ENCODE measurements at regions of chr5 and their contacts with region 1.

Region 1: GRCh38 chr5:76175051-76175666 is 92.0 kb downstream of the SV2C start:
- DNase-seq: peak; percentile 47 to 56
- H3K4me3 ChIP-seq: no peak overlapping the region
- H3K4me3 Mint-ChIP-seq: no peak overlapping the region
- H3K27ac Mint-ChIP-seq: no peak overlapping the region
- H3K4me1 ChIP-seq: no peaks in the 10 kb centered on the region
- H3K4me1 Mint-ChIP-seq: no peaks in the 10 kb centered on the region
- H3K27me3 ChIP-seq: no peaks in the 10 kb centered on the region
- H3K27me3 Mint-ChIP-seq: no peaks in the 10 kb centered on the region
- CTCF ChIP-seq: peak; percentile 77 to 84

Region 2: DNA sequence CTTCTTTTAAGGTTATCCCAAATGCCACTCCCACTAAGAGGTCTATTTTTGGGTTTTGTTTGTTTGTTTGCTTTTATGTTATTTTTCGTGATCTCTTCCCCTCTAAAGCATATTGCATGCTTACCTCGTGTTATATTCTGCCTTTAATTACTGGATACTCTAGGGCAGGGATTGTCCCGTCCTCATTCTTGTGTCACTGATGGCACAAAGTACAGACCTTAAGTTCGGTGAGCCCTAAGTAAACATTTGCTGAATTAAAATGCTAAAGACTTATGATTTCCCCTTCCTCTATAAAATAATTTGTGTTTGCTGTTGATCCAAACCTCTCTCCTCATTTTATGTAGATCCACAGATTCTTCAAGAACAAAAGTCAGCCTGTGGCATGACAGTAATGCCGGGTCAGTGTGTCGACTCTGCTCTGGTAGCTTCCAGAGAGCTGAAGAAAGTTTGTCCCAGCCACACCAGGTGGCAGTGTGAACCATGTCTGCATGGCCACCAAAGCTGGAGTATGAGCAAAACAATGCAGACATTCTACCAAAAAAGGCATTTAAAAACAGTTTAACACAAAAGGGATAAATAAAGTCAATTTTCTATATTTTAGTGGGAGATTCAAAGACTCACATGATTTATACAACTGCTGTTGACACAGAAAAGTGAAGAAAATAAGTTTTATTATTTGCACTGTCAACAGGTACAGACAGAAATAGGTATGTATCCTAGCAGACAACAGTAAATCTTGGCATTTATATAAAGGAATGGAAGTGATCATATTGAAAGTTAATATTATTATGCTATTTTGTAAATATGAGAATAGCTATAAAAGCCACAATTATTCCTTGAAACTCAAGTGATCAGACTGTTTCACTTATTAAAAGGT is 440.0 kb before region 1 on chr5:
- CTCF ChIA-PET with region 1: interaction called, 23 read pairs
- POLR2A ChIA-PET with region 1: no interaction called
- intact Hi-C with region 1: loop called (anchors 2 kb)
- DNase-seq: peak; percentile 61 to 62
- H3K4me3 ChIP-seq: no peak overlapping the region
- H3K4me3 Mint-ChIP-seq: no peak overlapping the region
- H3K27ac Mint-ChIP-seq: no peak overlapping the region
- H3K4me1 ChIP-seq: no peaks in the 10 kb centered on the region
- H3K4me1 Mint-ChIP-seq: no peaks in the 10 kb centered on the region
- H3K27me3 ChIP-seq: no peaks in the 10 kb centered on the region; the same call in 1 of the 2 replicates
- H3K27me3 Mint-ChIP-seq: peaks cover 7% of the 10 kb centered on the region
- CTCF ChIP-seq: peak; percentile 59 to 80

Region 3: DNA sequence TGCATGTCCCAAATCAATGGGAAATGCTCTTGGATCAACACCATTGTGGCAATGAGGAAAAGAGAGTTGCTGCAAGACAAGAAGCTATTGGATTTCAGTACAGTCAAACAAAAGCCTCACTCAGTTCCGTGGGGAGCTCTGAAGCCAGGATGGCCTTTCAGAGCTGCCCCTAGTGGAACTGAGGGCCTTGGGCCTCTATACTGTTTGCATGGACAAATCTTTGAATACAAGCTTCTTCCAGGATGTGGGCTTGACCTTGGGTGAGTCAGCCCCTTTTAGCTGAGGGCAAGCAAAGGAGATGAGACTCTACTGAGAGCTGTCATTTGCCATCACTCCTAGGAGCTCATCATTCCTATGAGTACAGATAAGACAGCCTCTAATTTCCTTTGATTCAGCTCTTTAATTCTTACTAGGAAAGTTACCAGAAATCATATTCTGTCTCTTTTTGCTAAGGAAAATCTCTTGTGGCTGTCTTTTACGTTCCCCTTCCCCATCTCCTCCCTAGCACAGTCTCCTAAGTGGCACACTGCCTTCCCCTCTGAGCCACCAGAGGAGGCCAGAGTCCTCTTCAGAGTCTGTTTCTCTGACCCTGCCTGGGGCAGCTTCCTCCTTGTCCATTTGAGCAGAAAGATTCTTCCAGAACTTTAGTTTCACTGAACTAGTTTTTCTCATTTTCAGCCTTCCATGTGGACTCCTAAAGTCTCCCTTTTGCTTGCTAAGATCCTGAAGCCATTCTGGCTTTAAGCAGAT is 289.1 kb before region 1 on chr5:
- CTCF ChIA-PET with region 1: interaction called, 6 read pairs
- POLR2A ChIA-PET with region 1: no interaction called
- intact Hi-C with region 1: loop called (anchors 2 kb)
- DNase-seq: peak in 1 of 2 experiments; percentile 13
- H3K4me3 ChIP-seq: no peak overlapping the region
- H3K4me3 Mint-ChIP-seq: no peak overlapping the region
- H3K27ac Mint-ChIP-seq: no peak overlapping the region
- H3K4me1 ChIP-seq: no peaks in the 10 kb centered on the region
- H3K4me1 Mint-ChIP-seq: no peaks in the 10 kb centered on the region
- H3K27me3 ChIP-seq: no peaks in the 10 kb centered on the region
- H3K27me3 Mint-ChIP-seq: no peaks in the 10 kb centered on the region
- CTCF ChIP-seq: peak; percentile 24 to 59

Region 4: DNA sequence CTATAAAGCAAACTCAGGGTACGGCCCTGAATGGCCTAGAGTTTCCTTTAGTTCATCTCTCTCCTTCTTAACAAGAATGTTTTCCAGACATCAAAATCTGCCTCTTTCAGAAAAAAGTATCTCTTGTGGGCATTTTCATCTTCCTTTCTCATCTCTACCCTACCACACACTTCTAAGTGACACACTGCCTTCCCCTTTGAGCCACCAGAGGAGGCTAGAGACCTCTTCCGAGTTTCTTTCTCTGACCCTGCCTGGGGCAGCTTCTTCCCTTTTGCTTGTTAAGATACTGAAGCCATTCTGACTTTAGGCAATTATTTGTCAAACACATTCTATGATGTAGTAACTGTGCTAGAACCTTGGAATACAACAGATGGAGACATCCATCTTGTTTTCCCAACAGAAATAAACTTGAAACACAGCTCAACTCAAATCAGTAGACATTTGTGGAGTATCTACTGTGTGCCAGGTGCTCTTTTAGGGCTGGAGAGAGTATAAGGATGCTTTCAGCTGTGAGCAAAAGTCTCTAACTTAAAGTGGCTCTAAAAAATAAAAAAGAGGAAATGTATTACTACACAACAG is 100.6 kb before region 1 on chr5:
- CTCF ChIA-PET with region 1: interaction called, 9 read pairs
- POLR2A ChIA-PET with region 1: no interaction called
- intact Hi-C with region 1: loop called (anchors 2 kb)
- DNase-seq: peak in 1 of 2 experiments; percentile 18
- H3K4me3 ChIP-seq: no peak overlapping the region
- H3K4me3 Mint-ChIP-seq: no peak overlapping the region
- H3K27ac Mint-ChIP-seq: no peak overlapping the region
- H3K4me1 ChIP-seq: no peaks in the 10 kb centered on the region
- H3K4me1 Mint-ChIP-seq: no peaks in the 10 kb centered on the region
- H3K27me3 ChIP-seq: no peaks in the 10 kb centered on the region
- H3K27me3 Mint-ChIP-seq: peaks cover 25% of the 10 kb centered on the region
- CTCF ChIP-seq: peak; percentile 51 to 79

Region 5: DNA sequence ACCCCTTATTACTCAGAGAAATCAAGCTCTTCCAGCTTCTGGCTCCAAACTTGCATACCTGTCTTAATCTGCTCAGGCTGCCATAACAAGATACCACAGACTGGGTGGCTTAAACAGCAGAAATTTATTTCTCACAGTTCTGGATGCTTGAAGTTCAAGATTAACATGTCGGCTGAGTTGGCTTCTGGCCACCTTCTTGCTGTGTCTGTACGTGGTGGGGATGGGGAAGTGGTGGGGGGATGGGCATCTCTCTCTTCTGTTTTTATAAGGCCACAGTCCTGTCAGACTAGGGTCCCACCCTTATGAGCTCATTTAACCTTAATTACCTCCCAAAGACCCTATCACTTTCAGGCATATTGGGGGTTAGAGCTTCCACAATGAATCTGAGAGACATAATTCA is 48.5 kb after region 1 on chr5:
- CTCF ChIA-PET with region 1: no interaction called
- POLR2A ChIA-PET with region 1: no interaction called
- intact Hi-C with region 1: no loop called
- DNase-seq: no peak
- H3K4me3 ChIP-seq: no peak overlapping the region
- H3K4me3 Mint-ChIP-seq: no peak overlapping the region
- H3K27ac Mint-ChIP-seq: no peak overlapping the region
- H3K4me1 ChIP-seq: no peaks in the 10 kb centered on the region
- H3K4me1 Mint-ChIP-seq: no peaks in the 10 kb centered on the region
- H3K27me3 ChIP-seq: no peaks in the 10 kb centered on the region
- H3K27me3 Mint-ChIP-seq: peaks cover 9% of the 10 kb centered on the region
- CTCF ChIP-seq: no peak

Measured in Caco-2 (cell line).